Posterior vena cava (tissue), 2 donors: ENCODE measurements at regions of chr17 and their contacts with region 1.

Region 1: GRCh38 chr17:46053911-46054534 is 55.0 kb downstream of the STH start:
- DNase-seq: no peak

Region 2: DNA sequence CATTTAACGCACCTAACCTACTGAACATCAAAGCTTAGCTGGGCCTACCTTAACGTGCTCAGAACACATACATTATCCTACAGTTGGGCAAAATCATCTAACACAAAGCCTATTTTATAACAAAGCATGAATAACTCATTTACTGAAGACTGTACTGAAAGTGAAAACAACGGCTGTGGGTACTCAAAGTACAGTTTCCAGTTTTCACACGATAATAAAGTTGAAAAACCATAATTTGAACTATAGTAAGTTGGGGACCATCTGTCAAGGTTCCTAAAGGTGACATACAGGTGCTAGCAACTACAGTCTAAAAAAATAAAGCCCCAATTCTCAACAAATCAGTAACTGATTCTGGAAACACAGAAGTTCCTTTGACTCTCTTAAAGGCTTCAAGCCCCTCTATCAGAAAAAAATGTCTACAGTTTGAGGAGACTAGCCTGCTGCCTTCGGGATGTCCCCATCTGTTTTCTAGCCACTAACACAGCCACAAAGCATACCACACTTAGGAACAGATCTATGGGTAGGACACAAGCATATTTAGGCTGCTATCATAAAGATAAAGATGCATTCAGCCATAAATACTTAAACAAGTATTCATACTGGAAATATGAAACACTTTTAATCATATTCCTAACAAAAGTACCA is 67.9 kb after region 1 on chr17:
- intact Hi-C with region 1: no loop called
- DNase-seq: no peak

Region 3: DNA sequence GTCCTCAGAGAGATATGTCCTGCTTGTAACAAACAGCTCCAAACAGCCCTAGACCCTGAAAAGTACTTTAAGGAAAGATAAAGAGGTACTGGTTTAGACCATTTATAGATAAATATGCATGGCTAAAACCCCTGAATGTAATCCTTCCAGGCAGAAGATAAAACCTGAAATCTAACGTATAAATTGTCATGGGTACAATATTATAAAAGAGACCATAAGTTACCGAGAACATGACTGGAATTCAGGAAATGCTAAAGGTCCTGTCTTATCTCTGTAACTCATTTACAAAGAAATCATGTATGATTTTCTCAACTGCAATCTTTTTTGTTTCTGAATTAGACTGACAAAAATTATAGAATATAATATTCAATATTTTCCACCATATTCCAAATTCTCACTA is 148.4 kb after region 1 on chr17:
- intact Hi-C with region 1: loop called in 1 of 2 experiments (anchors 5 kb)
- DNase-seq: no peak